Heart left ventricle (tissue), 16 donors: ENCODE measurements at regions of chr15 and their contacts with region 1.

Region 1: GRCh38 chr15:58331903-58332675 is 99.7 kb upstream of the LIPC start:
- DNase-seq: peak; percentile 94 to 98 (median 96)
- ATAC-seq: peak; percentile 96 to 98 (median 97)
- H3K4me3 ChIP-seq: peak overlapping the region in 2 of 12 donors; percentile 1 to 14
- H3K27ac ChIP-seq: peak overlapping the region; percentile 79 to 95 (median 90)
- H3K4me1 ChIP-seq: peaks cover 8 to 48% (median 31%) of the 10 kb centered on the region in 12 donors
- H3K27me3 ChIP-seq: no peaks in the 10 kb centered on the region
- CTCF ChIP-seq: no peak
- POLR2A ChIP-seq: peak in 1 of 2 donors; percentile 13

Region 2: DNA sequence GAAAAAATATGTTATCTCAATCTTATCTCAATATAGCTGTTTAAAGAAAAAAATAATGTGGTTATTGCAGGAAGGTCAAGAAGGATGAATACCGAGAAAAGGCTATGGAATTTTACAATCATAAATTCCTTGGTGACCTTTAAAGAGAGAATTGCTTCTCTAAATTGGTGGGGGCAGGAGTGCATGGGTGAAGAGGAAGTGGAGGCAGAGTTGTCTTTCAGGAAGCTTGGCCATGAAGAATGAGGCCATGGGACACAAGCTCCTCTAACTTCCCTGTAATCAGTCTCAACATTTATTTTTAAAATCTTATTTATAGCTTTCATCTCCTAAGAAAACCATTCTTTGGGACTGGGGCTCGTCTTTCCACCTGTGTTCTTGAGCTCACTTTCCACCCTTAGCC is 244.2 kb before region 1 on chr15:
- intact Hi-C with region 1: no loop called
- DNase-seq: no peak
- ATAC-seq: no peak
- H3K4me3 ChIP-seq: no peak overlapping the region
- H3K27ac ChIP-seq: no peak overlapping the region
- H3K4me1 ChIP-seq: no peaks in the 10 kb centered on the region
- H3K27me3 ChIP-seq: no peaks in the 10 kb centered on the region
- CTCF ChIP-seq: no peak
- POLR2A ChIP-seq: no peak

Region 3: GRCh38 chr15:58369261-58369701 is 37.2 kb after region 1 on chr15:
- intact Hi-C with region 1: no loop called
- DNase-seq: no peak
- ATAC-seq: no peak
- H3K4me3 ChIP-seq: no peak overlapping the region
- H3K27ac ChIP-seq: no peak overlapping the region
- H3K4me1 ChIP-seq: peaks cover 0 to 5% (median 0%) of the 10 kb centered on the region in 12 donors
- H3K27me3 ChIP-seq: no peaks in the 10 kb centered on the region
- CTCF ChIP-seq: no peak
- POLR2A ChIP-seq: no peak

Region 4: GRCh38 chr15:58666957-58667356 is 334.9 kb after region 1 on chr15:
- intact Hi-C with region 1: loop called in 1 of 10 experiments (anchors 5 kb)
- DNase-seq: no peak
- ATAC-seq: peak in 1 of 4 donors; percentile 20
- H3K4me3 ChIP-seq: no peak overlapping the region
- H3K27ac ChIP-seq: peak overlapping the region in 1 of 12 donors; percentile 3
- H3K4me1 ChIP-seq: peaks cover 0 to 27% (median 2%) of the 10 kb centered on the region in 12 donors
- H3K27me3 ChIP-seq: no peaks in the 10 kb centered on the region
- CTCF ChIP-seq: no peak
- POLR2A ChIP-seq: no peak